ENCODE measurements at regions of chr1 and their contacts with region 1.

Region 1: DNA sequence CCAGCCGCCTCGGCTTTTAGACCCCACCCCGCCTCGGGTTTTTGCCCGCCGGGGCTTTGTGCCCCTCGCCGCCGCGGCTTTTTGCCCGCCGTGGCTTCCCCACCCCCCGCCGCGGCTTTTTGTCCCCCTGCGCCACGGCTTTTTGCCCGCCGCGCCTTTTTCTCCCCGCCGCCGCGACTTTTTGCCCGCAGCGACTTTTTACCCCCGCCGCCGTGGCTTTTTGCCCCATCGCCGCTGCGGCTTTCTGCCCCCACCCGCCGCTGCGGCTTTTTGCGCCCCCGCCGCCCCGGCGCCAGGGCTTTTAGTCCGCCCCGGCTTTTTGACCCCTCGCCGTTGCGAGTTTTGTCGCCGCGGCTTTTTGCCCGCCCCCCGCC is 474.4 kb downstream of the FAM72C start:
- DNase-seq: no peak
- H3K4me3 ChIP-seq: peak overlapping the region in 1 of 4 donors; percentile 57
- H3K27ac ChIP-seq: no peak overlapping the region
- H3K4me1 ChIP-seq: peaks cover 0 to 4% (median 0%) of the 10 kb centered on the region in 4 donors
- H3K27me3 ChIP-seq: peaks cover 18% of the 10 kb centered on the region
- CTCF ChIP-seq: no peak
- EP300 ChIP-seq: no peak
- POLR2A ChIP-seq: no peak

Region 2: GRCh38 chr1:143625886-143626285 is 128.5 kb after region 1 on chr1:
- in situ Hi-C with region 1: no loop called
- intact Hi-C with region 1: no loop called
- DNase-seq: no peak
- H3K4me3 ChIP-seq: no peak overlapping the region
- H3K27ac ChIP-seq: no peak overlapping the region
- H3K4me1 ChIP-seq: no peaks in the 10 kb centered on the region
- H3K27me3 ChIP-seq: no peaks in the 10 kb centered on the region
- CTCF ChIP-seq: no peak
- EP300 ChIP-seq: no peak
- POLR2A ChIP-seq: no peak

Region 3: GRCh38 chr1:143661418-143662101 is 164.2 kb after region 1 on chr1:
- in situ Hi-C with region 1: no loop called
- intact Hi-C with region 1: loop called (anchors 10 kb)
- DNase-seq: no peak
- H3K4me3 ChIP-seq: no peak overlapping the region
- H3K27ac ChIP-seq: no peak overlapping the region
- H3K4me1 ChIP-seq: no peaks in the 10 kb centered on the region
- H3K27me3 ChIP-seq: peaks cover 22% of the 10 kb centered on the region
- CTCF ChIP-seq: no peak
- EP300 ChIP-seq: no peak
- POLR2A ChIP-seq: no peak